HCT116 (cell line): ENCODE measurements at regions of chr5 and their contacts with region 1.

Region 1: DNA sequence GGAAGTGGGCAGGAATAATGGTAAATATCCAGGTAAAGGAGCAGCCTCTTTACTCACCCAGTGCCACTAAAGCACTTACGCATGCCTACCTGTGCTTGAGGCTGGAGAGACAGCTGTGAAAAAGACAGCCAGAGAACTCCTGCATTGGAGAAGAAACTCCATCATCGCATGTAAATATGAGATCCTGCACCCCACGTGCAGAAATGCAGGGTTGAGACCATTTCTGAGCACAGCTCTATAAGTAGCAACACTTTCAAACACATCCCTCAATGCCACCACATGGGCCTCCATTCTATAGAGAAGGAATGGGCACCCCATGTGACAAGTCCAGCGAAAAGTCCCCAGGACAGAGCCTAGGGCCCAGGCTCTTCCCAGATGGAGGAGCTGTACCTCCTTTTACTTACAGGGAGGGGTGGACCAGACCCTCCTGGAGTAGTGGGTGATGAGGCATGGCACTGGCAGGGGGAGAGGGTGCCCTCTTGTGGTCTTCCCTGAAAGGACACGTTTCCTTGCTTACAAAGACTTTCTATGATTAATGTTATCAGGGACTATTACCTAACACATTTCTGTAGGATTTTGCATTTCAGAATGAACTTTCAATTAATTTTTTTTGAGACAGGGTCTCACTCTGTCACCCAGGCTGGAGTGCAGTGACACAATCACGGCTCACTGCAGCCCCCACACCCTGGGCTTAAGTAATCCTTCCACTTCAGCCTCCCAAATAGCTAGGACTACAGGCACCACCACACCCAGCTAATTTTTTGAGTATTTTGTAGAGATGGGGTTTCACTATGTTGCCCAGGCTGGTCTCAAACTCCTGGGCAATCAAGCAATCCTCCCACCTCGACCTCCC is 55.3 kb upstream of the IL17B start:
- DNase-seq: no peak
- ATAC-seq: peak; percentile 44
- H3K4me3 ChIP-seq: no peak overlapping the region
- H3K27ac ChIP-seq: no peak overlapping the region
- H3K4me1 ChIP-seq: peaks cover 19 to 58% of the 10 kb centered on the region in 2 experiments
- H3K27me3 ChIP-seq: no peaks in the 10 kb centered on the region
- CTCF ChIP-seq: peak in 2 of 3 experiments; percentile 92 to 93; a peak in 4 of 6 replicates
- POLR2A ChIP-seq: no peak
- RAD21 ChIP-seq: no peak

Region 2: GRCh38 chr5:149317281-149318048 is 116.9 kb before region 1 on chr5:
- CTCF ChIA-PET with region 1: interaction called, 12 read pairs
- POLR2A ChIA-PET with region 1: no interaction called
- RAD21 ChIA-PET with region 1: no interaction called
- intact Hi-C with region 1: loop called (anchors 1 kb)
- DNase-seq: peak; percentile 23
- ATAC-seq: peak; percentile 53
- H3K4me3 ChIP-seq: no peak overlapping the region
- H3K27ac ChIP-seq: no peak overlapping the region
- H3K4me1 ChIP-seq: peaks cover 11 to 22% of the 10 kb centered on the region in 2 experiments
- H3K27me3 ChIP-seq: no peaks in the 10 kb centered on the region
- CTCF ChIP-seq: peak; percentile 66 to 87 (median 72)
- POLR2A ChIP-seq: no peak
- RAD21 ChIP-seq: peak; percentile 87

Region 3: GRCh38 chr5:149367249-149367971 is 67.0 kb before region 1 on chr5:
- CTCF ChIA-PET with region 1: interaction called, 7 read pairs
- POLR2A ChIA-PET with region 1: no interaction called
- RAD21 ChIA-PET with region 1: interaction called in 1 of 2 experiments, 5 read pairs
- intact Hi-C with region 1: loop called (anchors 5 kb)
- DNase-seq: peak; percentile 79
- ATAC-seq: peak; percentile 82
- H3K4me3 ChIP-seq: no peak overlapping the region
- H3K27ac ChIP-seq: no peak overlapping the region
- H3K4me1 ChIP-seq: peaks cover 4 to 9% of the 10 kb centered on the region in 2 experiments; a peak in 3 of 4 replicates
- H3K27me3 ChIP-seq: no peaks in the 10 kb centered on the region
- CTCF ChIP-seq: peak; percentile 93 to 97 (median 94)
- POLR2A ChIP-seq: no peak
- RAD21 ChIP-seq: peak; percentile 86

Region 4: GRCh38 chr5:149381987-149382340 is 52.4 kb before region 1 on chr5:
- CTCF ChIA-PET with region 1: interaction called, 20 read pairs
- POLR2A ChIA-PET with region 1: no interaction called
- RAD21 ChIA-PET with region 1: interaction called in 1 of 2 experiments, 8 read pairs
- intact Hi-C with region 1: loop called (anchors 1 kb)
- DNase-seq: peak; percentile 33
- ATAC-seq: peak; percentile 97
- H3K4me3 ChIP-seq: no peak overlapping the region
- H3K27ac ChIP-seq: no peak overlapping the region
- H3K4me1 ChIP-seq: peaks cover 0 to 6% of the 10 kb centered on the region in 2 experiments; a peak in 2 of 4 replicates
- H3K27me3 ChIP-seq: no peaks in the 10 kb centered on the region
- CTCF ChIP-seq: peak; percentile 88 to 93 (median 90)
- POLR2A ChIP-seq: no peak
- RAD21 ChIP-seq: peak; percentile 96

Region 5: GRCh38 chr5:149474212-149474618 is 39.8 kb after region 1 on chr5:
- CTCF ChIA-PET with region 1: no interaction called
- POLR2A ChIA-PET with region 1: no interaction called
- RAD21 ChIA-PET with region 1: no interaction called
- intact Hi-C with region 1: no loop called
- DNase-seq: no peak
- ATAC-seq: peak; percentile 92
- H3K4me3 ChIP-seq: no peak overlapping the region
- H3K27ac ChIP-seq: no peak overlapping the region
- H3K4me1 ChIP-seq: peaks cover 3 to 35% of the 10 kb centered on the region in 2 experiments
- H3K27me3 ChIP-seq: no peaks in the 10 kb centered on the region
- CTCF ChIP-seq: peak in 1 of 3 experiments; percentile 33; a peak in 2 of 6 replicates
- POLR2A ChIP-seq: no peak
- RAD21 ChIP-seq: no peak

Region 6: DNA sequence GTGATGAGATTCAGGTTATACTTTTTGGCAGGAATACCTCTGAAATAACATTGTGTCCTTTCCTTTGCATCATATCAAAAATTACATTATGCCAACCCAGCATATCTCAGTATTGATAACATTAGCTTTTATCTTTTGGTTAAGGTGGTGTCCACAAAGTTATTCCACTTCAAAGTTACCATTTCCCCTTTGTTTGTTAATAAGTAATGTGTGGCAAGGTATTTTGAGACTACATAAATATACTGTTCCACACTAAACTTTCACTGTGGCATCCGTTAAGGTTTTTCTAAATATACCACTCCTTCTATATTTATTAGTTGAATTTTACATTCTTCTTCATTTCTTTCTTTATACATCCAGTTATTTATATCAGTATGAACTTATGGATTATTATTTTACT is 132.8 kb after region 1 on chr5:
- CTCF ChIA-PET with region 1: interaction called, 45 read pairs
- POLR2A ChIA-PET with region 1: interaction called, 32 read pairs
- RAD21 ChIA-PET with region 1: no interaction called
- intact Hi-C with region 1: loop called (anchors 2 kb)
- DNase-seq: no peak
- ATAC-seq: no peak
- H3K4me3 ChIP-seq: no peak overlapping the region
- H3K27ac ChIP-seq: no peak overlapping the region
- H3K4me1 ChIP-seq: peaks cover 20 to 28% of the 10 kb centered on the region in 2 experiments
- H3K27me3 ChIP-seq: no peaks in the 10 kb centered on the region
- CTCF ChIP-seq: no peak
- POLR2A ChIP-seq: no peak
- RAD21 ChIP-seq: no peak

Region 7: GRCh38 chr5:149618581-149619251 is 184.3 kb after region 1 on chr5:
- CTCF ChIA-PET with region 1: interaction called, 22 read pairs
- POLR2A ChIA-PET with region 1: interaction called, 3 read pairs
- RAD21 ChIA-PET with region 1: no interaction called
- intact Hi-C with region 1: no loop called
- DNase-seq: peak; percentile 47
- ATAC-seq: peak; percentile 95
- H3K4me3 ChIP-seq: no peak overlapping the region
- H3K27ac ChIP-seq: no peak overlapping the region
- H3K4me1 ChIP-seq: peaks cover 2 to 24% of the 10 kb centered on the region in 2 experiments; a peak in 3 of 4 replicates
- H3K27me3 ChIP-seq: no peaks in the 10 kb centered on the region
- CTCF ChIP-seq: peak; percentile 72 to 90 (median 87)
- POLR2A ChIP-seq: no peak
- RAD21 ChIP-seq: peak; percentile 97

Region 8: DNA sequence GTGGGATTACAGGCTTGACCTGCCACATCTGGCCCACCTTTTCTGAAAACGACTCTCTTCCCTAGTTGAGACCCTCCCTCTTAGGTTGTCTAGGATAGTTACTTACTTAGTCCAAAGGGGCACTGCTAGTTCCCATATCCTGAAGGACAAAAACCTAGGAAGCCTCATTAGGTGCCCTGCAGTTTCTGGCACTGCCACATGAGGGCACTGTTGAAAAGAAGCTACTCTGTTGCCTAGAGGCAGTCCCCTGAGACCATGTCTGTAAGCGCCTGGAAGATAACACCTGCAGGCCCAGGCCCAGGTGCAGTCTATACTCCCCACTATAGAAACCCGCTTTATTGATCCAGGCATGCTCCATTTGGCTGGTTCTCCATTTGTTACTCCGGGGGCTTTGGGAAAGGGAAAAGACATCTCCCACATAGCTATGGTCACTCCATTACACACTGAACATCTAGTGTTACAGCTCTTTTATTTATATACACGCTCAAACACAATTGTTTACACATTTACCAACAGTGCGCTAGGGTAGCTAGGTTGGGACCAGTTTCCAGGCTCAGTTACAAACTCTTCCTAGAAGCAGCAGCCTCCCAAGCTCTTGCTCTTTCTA is 222.3 kb after region 1 on chr5:
- CTCF ChIA-PET with region 1: no interaction called
- POLR2A ChIA-PET with region 1: no interaction called
- RAD21 ChIA-PET with region 1: no interaction called
- intact Hi-C with region 1: no loop called
- DNase-seq: no peak
- ATAC-seq: peak; percentile 73
- H3K4me3 ChIP-seq: no peak overlapping the region
- H3K27ac ChIP-seq: no peak overlapping the region
- H3K4me1 ChIP-seq: no peaks in the 10 kb centered on the region
- H3K27me3 ChIP-seq: no peaks in the 10 kb centered on the region
- CTCF ChIP-seq: peak; percentile 60 to 93 (median 87)
- POLR2A ChIP-seq: no peak
- RAD21 ChIP-seq: peak; percentile 61